ENCODE measurements at regions of chrX and their contacts with region 1.

Region 1: GRCh38 chrX:8971116-8971515 is 62.8 kb downstream of the FAM9B start:
- DNase-seq: peak; percentile 79
- ATAC-seq: peak; percentile 90
- H3K4me3 ChIP-seq: no peak overlapping the region
- H3K27ac ChIP-seq: no peak overlapping the region
- H3K4me1 ChIP-seq: no peaks in the 10 kb centered on the region
- H3K27me3 ChIP-seq: no peaks in the 10 kb centered on the region
- CTCF ChIP-seq: peak; percentile 64

Region 2: GRCh38 chrX:7635604-7636003 is 1335.5 kb before region 1 on chrX:
- CTCF ChIA-PET with region 1: no interaction called
- POLR2A ChIA-PET with region 1: no interaction called
- intact Hi-C with region 1: no loop called
- DNase-seq: no peak
- ATAC-seq: no peak
- H3K4me3 ChIP-seq: no peak overlapping the region
- H3K27ac ChIP-seq: no peak overlapping the region
- H3K4me1 ChIP-seq: no peaks in the 10 kb centered on the region
- H3K27me3 ChIP-seq: no peaks in the 10 kb centered on the region
- CTCF ChIP-seq: no peak

Region 3: DNA sequence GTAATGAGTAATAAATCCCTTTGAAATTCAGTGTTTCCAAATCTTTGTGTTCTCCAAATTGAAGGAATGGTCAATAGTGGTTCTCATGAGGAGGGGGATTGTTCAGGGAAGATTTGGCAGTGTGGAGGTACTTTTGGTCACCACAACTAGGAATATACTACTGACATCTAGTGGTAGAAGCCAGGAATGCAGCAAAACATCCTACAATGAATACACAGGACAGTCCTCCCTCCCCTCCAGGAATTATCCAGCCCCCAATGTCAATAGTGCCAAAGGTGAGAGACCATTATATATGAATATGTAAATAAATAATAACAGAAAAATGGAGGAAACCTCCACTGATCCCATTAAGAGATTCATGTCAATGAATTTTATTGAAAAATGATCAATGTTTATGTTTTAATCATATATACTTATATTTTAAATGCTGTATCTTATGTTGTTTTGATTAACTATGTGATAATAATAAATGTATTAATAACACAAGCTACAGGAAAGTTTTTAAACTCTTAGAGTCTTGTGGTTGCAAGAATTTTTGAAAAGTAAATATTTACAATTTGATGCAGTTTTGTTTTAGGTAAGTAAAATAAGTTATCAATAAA is 155.6 kb before region 1 on chrX:
- CTCF ChIA-PET with region 1: interaction called, 15 read pairs
- POLR2A ChIA-PET with region 1: no interaction called
- intact Hi-C with region 1: loop called (anchors 1 kb)
- DNase-seq: peak; percentile 82
- ATAC-seq: peak; percentile 64
- H3K4me3 ChIP-seq: no peak overlapping the region
- H3K27ac ChIP-seq: no peak overlapping the region
- H3K4me1 ChIP-seq: no peaks in the 10 kb centered on the region
- H3K27me3 ChIP-seq: no peaks in the 10 kb centered on the region
- CTCF ChIP-seq: peak; percentile 80

Region 4: GRCh38 chrX:8868906-8869305 is 102.2 kb before region 1 on chrX:
- CTCF ChIA-PET with region 1: no interaction called
- POLR2A ChIA-PET with region 1: no interaction called
- intact Hi-C with region 1: loop called (anchors 1 kb)
- DNase-seq: peak; percentile 57
- ATAC-seq: peak; percentile 70
- H3K4me3 ChIP-seq: peak overlapping the region; percentile 57
- H3K27ac ChIP-seq: peak overlapping the region; percentile 100
- H3K4me1 ChIP-seq: peaks cover 44% of the 10 kb centered on the region
- H3K27me3 ChIP-seq: no peaks in the 10 kb centered on the region
- CTCF ChIP-seq: peak; percentile 64

Region 5: GRCh38 chrX:9071031-9071650 is 100.0 kb after region 1 on chrX:
- CTCF ChIA-PET with region 1: no interaction called
- POLR2A ChIA-PET with region 1: no interaction called
- intact Hi-C with region 1: loop called (anchors 5 kb)
- DNase-seq: peak; percentile 82
- ATAC-seq: peak; percentile 90
- H3K4me3 ChIP-seq: no peak overlapping the region
- H3K27ac ChIP-seq: peak overlapping the region; percentile 91
- H3K4me1 ChIP-seq: peaks cover 16% of the 10 kb centered on the region
- H3K27me3 ChIP-seq: no peaks in the 10 kb centered on the region
- CTCF ChIP-seq: no peak

Region 6: GRCh38 chrX:9163214-9163681 is 192.1 kb after region 1 on chrX:
- CTCF ChIA-PET with region 1: no interaction called
- POLR2A ChIA-PET with region 1: no interaction called
- intact Hi-C with region 1: loop called (anchors 5 kb)
- DNase-seq: peak; percentile 79
- ATAC-seq: peak; percentile 56
- H3K4me3 ChIP-seq: peak overlapping the region; percentile 28; the same call in 1 of the 2 replicates
- H3K27ac ChIP-seq: peak overlapping the region; percentile 98
- H3K4me1 ChIP-seq: peaks cover 55% of the 10 kb centered on the region
- H3K27me3 ChIP-seq: no peaks in the 10 kb centered on the region
- CTCF ChIP-seq: no peak

Region 7: GRCh38 chrX:9204537-9204936 is 233.4 kb after region 1 on chrX:
- CTCF ChIA-PET with region 1: no interaction called
- POLR2A ChIA-PET with region 1: no interaction called
- intact Hi-C with region 1: loop called (anchors 1 kb)
- DNase-seq: peak; percentile 78
- ATAC-seq: peak; percentile 97
- H3K4me3 ChIP-seq: no peak overlapping the region
- H3K27ac ChIP-seq: 0 out of 2 replicates have a peak overlapping the region, but pooled peaks have one; percentile 11
- H3K4me1 ChIP-seq: peaks cover 9% of the 10 kb centered on the region
- H3K27me3 ChIP-seq: no peaks in the 10 kb centered on the region
- CTCF ChIP-seq: no peak